BJ (cell line): ENCODE measurements at regions of chr1 and their contacts with region 1.

Region 1: GRCh38 chr1:39360731-39361130 is 130.7 kb upstream of the BMP8A start:
- DNase-seq: no peak
- H3K4me3 ChIP-seq: no peak overlapping the region
- H3K27me3 ChIP-seq: no peaks in the 10 kb centered on the region
- CTCF ChIP-seq: no peak

Region 2: GRCh38 chr1:39398278-39399021 is 37.7 kb after region 1 on chr1:
- CTCF ChIA-PET with region 1: no interaction called
- POLR2A ChIA-PET with region 1: interaction called, 16 read pairs
- DNase-seq: peak; percentile 93
- H3K4me3 ChIP-seq: no peak overlapping the region
- H3K27me3 ChIP-seq: no peaks in the 10 kb centered on the region
- CTCF ChIP-seq: 0 out of 2 replicates have a peak, but pooled peaks have one; percentile 9